ENCODE measurements at regions of chr5 and their contacts with region 1.

Region 1: DNA sequence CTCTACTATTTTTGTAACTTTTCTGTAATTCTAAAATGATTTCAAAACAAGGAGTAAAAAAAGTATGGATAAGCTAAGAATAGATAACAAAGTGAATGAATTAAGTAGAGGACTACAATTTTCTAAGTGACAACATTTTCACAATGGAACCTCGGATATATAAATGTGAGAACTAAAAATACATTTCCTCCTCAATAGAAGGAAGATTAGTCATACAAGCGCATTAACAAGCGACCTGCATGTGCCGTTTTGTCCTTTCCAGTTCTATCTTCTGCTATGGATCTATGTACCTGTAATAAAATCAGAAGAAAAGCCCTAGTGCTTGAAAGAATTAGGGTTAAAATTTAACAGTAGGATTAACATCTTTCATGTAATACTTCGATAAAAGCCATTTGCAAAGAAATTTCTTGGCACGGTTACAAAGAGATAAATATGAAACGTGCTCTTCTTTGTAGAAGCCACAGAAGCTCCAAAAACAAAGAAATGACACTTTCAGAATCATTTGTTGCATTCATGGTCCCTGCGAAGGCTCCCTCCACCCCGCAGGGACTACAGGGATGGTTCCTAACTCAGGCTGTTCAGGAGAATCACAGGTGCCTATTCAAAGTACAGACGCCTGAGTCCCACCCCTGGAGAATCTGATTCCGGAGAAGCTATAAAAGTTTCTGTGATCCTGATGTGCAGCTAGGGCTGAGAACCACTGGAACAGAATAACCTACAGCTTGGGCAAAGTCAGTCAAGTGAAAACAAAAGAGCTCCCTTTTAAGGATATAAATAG is 216.6 kb upstream of the EFNA5 start:
- DNase-seq: no peak
- H3K4me3 Mint-ChIP-seq: peak overlapping the region; percentile 55
- H3K27ac Mint-ChIP-seq: peak overlapping the region; percentile 69
- H3K4me1 Mint-ChIP-seq: peaks cover 38% of the 10 kb centered on the region
- H3K27me3 Mint-ChIP-seq: no peaks in the 10 kb centered on the region

Region 2: GRCh38 chr5:107365320-107366109 is 521.8 kb before region 1 on chr5:
- intact Hi-C with region 1: no loop called
- DNase-seq: no peak
- H3K4me3 Mint-ChIP-seq: no peak overlapping the region
- H3K27ac Mint-ChIP-seq: no peak overlapping the region
- H3K4me1 Mint-ChIP-seq: peaks cover 5% of the 10 kb centered on the region
- H3K27me3 Mint-ChIP-seq: peaks cover 8% of the 10 kb centered on the region

Region 3: DNA sequence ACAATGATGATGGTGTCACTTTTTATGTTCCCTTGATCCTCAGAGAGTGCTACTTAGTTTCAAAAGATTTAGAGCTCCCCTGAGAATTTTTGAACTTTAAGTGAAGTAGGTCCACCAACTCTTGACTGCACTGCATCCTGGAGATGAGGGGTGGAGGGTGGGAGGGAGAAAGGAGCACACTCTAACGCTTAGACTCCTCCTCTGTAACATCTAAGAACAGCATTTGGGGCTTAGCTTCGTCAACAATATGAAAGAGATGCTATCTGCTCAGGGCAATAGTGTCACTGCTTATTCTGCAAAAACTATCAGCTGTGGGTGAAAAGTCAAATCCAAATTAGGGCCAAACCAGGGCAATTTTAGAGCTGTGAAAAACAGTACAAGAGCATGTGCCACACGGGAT is 26.1 kb after region 1 on chr5:
- intact Hi-C with region 1: loop called (anchors 2 kb)
- DNase-seq: no peak
- H3K4me3 Mint-ChIP-seq: peak overlapping the region; percentile 36
- H3K27ac Mint-ChIP-seq: peak overlapping the region; percentile 79
- H3K4me1 Mint-ChIP-seq: peaks cover 49% of the 10 kb centered on the region
- H3K27me3 Mint-ChIP-seq: no peaks in the 10 kb centered on the region

Region 4: DNA sequence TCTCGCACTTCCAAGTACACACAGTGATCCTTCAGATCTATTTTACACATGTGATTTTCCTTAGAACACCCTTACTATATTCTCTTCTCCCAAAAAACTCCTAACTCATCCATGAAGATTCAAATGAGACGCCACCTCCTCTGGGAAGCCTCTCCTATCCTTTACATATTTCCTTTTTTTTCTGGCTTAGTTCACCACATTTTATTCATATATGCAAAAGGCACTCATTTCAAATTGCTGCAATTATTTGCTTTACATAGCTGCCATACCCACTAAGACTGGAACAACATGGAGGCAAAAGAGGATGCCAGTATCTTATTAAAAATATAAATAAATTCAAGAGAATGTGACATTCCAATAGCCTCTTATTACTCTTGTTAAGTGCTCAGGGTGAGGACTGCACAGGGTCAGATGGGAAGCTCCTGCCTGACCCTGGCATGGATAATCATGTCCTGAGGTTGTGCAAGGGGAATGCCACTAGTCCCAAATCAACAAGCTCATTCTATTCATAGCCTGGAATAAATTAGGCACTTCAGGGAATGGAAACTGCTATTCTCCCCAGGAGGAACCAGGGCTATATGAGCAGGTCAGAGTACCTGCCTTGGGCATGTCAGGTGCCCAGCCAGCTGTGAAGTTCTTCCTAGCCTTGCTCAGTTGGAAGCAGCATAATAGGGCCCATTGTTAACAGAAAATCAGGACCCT is 231.6 kb after region 1 on chr5:
- intact Hi-C with region 1: no loop called
- DNase-seq: no peak
- H3K4me3 Mint-ChIP-seq: no peak overlapping the region
- H3K27ac Mint-ChIP-seq: no peak overlapping the region
- H3K4me1 Mint-ChIP-seq: no peaks in the 10 kb centered on the region
- H3K27me3 Mint-ChIP-seq: no peaks in the 10 kb centered on the region